Breast epithelium (tissue), 4 donors: ENCODE measurements at regions of chr4 and their contacts with region 1.

Region 1: GRCh38 chr4:42262701-42263490 is 110.4 kb upstream of the BEND4 start:
- DNase-seq: no peak
- H3K4me3 ChIP-seq: no peak overlapping the region
- H3K27ac ChIP-seq: no peak overlapping the region
- H3K4me1 ChIP-seq: no peaks in the 10 kb centered on the region
- H3K27me3 ChIP-seq: no peaks in the 10 kb centered on the region
- CTCF ChIP-seq: no peak
- POLR2A ChIP-seq: no peak

Region 2: GRCh38 chr4:42205541-42205940 is 57.4 kb before region 1 on chr4:
- intact Hi-C with region 1: loop called (anchors 2 kb)
- DNase-seq: no peak
- H3K4me3 ChIP-seq: no peak overlapping the region
- H3K27ac ChIP-seq: no peak overlapping the region
- H3K4me1 ChIP-seq: no peaks in the 10 kb centered on the region
- H3K27me3 ChIP-seq: no peaks in the 10 kb centered on the region
- CTCF ChIP-seq: no peak
- POLR2A ChIP-seq: no peak

Region 3: DNA sequence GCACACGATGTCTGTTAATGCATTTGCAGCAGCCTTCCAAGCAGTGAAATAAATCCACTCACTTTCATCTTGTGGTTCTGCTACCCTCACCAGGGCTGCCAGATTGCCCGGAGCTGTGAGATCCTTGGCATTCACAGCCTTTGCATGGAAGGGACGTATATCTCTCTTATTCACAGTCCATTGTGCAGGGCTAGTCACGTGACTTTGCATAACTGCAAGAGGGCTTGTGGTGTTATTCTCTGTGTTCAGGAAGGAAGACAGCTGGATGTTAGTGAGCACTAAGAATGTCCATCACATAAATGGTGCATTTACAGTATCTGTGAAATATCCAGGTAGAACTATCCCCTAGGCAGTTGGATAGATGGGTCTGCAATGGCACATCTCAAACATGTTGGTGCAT is 13.9 kb before region 1 on chr4:
- intact Hi-C with region 1: no loop called
- DNase-seq: no peak
- H3K4me3 ChIP-seq: no peak overlapping the region
- H3K27ac ChIP-seq: no peak overlapping the region
- H3K4me1 ChIP-seq: no peaks in the 10 kb centered on the region
- H3K27me3 ChIP-seq: no peaks in the 10 kb centered on the region
- CTCF ChIP-seq: no peak
- POLR2A ChIP-seq: no peak